Right ventricle myocardium inferior (tissue), 1 donor: ENCODE measurements at regions of chr5 and their contacts with region 1.

Region 1: DNA sequence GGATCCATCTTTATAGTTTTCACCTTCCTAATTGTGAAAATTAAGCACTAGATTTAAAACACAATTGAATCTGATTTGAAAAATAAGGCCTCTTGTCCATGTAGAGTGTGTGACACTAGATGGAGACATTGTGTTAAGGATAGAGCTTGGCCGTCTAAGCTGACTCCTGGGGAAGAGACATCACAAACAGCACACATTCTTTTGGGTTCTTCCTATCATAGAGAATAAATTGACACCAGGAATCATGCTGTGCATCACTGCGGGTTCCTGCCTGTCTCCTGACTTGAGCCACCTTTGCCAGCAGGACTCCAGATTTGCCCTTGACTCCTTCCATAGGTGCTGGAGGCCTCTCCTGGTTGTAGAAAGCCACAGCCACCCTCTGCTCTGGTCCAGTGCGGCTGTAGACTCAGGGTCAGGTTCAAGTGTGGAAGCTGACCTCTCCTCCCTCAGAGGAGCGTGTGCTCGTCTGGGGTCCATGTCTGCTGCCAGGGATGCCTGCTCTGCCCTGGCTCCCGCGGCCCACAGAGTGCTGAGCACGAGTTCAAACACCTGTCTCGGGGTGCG is 11.2 kb downstream of the ROPN1L start:
- DNase-seq: no peak
- ATAC-seq: peak; percentile 75

Region 2: GRCh38 chr5:10409504-10409903 is 43.3 kb before region 1 on chr5:
- intact Hi-C with region 1: no loop called
- DNase-seq: no peak
- ATAC-seq: no peak

Region 3: GRCh38 chr5:10432059-10433008 is 20.5 kb before region 1 on chr5:
- intact Hi-C with region 1: no loop called
- DNase-seq: no peak
- ATAC-seq: no peak

Region 4: GRCh38 chr5:10689391-10690081 is 236.7 kb after region 1 on chr5:
- intact Hi-C with region 1: loop called (anchors 5 kb)
- DNase-seq: no peak
- ATAC-seq: peak; percentile 20